ENCODE measurements at regions of chr11 and their contacts with region 1.

Region 1: DNA sequence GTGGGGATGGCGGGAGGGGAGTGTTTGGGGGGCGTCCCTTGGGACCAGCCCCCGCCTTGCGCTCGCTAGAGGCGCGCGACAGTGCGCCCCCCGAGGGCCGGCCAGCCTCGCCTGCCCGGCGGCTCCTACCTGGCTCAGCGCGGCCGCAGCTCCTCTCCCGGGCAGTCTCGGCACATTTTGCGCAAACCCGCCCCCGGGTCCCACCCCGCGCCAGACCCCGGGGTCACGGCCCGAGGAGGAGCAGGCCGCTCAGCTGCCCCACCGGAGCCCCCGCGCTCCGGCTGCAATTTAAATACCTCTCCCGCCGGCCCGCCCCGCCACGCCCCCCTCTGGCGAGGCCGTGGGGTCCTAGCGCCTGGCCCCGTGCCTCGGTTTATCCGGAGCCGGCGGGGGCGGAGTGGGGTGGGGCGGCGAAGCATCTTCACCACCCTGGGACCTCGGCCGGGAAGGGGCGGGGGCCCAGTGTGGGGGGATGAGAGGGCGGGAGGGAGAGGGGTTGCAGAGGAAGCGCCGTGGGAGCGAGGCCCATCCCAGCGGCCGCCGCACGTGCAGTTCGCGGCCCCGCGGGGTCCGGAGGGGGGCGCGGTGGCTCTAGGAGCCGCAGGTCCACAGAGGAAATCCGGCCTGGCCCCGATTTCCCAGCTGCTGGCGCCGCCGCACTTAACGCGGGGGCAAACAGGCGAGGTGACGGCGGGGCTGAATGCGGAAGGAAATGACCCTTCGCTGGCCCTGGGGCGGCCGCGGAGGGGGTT is at the start of gene LRRC32:
- DNase-seq: peak in 1 of 2 experiments; percentile 38
- H3K4me3 ChIP-seq: peak within 1 kb of the TSS; percentile 28
- H3K4me3 Mint-ChIP-seq: peak within 1 kb of the TSS; percentile 60
- H3K27ac Mint-ChIP-seq: no peak within 1 kb of the TSS
- H3K4me1 ChIP-seq: peaks cover 9% of the 10 kb centered on the region
- H3K4me1 Mint-ChIP-seq: no peaks in the 10 kb centered on the region
- H3K27me3 ChIP-seq: no peaks in the 10 kb centered on the region
- H3K27me3 Mint-ChIP-seq: peaks cover 3% of the 10 kb centered on the region
- CTCF ChIP-seq: no peak
- total RNA-seq, gene LRRC32: 0.27 and 0.84 TPM in 2 replicates

Region 2: GRCh38 chr11:76574406-76574805 is 96.3 kb before region 1 on chr11:
- CTCF ChIA-PET with region 1: interaction called, 4 read pairs
- POLR2A ChIA-PET with region 1: no interaction called
- intact Hi-C with region 1: loop called (anchors 5 kb)
- DNase-seq: no peak
- H3K4me3 ChIP-seq: no peak overlapping the region
- H3K4me3 Mint-ChIP-seq: no peak overlapping the region
- H3K27ac Mint-ChIP-seq: peak overlapping the region; percentile 9
- H3K4me1 ChIP-seq: peaks cover 71% of the 10 kb centered on the region
- H3K4me1 Mint-ChIP-seq: peaks cover 60% of the 10 kb centered on the region
- H3K27me3 ChIP-seq: no peaks in the 10 kb centered on the region
- H3K27me3 Mint-ChIP-seq: no peaks in the 10 kb centered on the region
- CTCF ChIP-seq: no peak

Measured in Caco-2 (cell line).